Caco-2 (cell line): ENCODE measurements at regions of chr11 and their contacts with region 1.

Region 1: GRCh38 chr11:67265633-67266423 is 445 bp upstream of the GRK2 start:
- DNase-seq: peak; percentile 80 to 96
- H3K4me3 ChIP-seq: peak overlapping the region; percentile 16
- H3K4me3 Mint-ChIP-seq: peak overlapping the region; percentile 100
- H3K27ac Mint-ChIP-seq: peak overlapping the region; percentile 95
- H3K4me1 ChIP-seq: peaks cover 31% of the 10 kb centered on the region
- H3K4me1 Mint-ChIP-seq: peaks cover 28% of the 10 kb centered on the region
- H3K27me3 ChIP-seq: no peaks in the 10 kb centered on the region
- H3K27me3 Mint-ChIP-seq: no peaks in the 10 kb centered on the region
- CTCF ChIP-seq: peak; percentile 78 to 84

Region 2: GRCh38 chr11:67204822-67205221 is 61.0 kb before region 1 on chr11:
- CTCF ChIA-PET with region 1: no interaction called
- POLR2A ChIA-PET with region 1: no interaction called
- intact Hi-C with region 1: no loop called
- DNase-seq: no peak
- H3K4me3 ChIP-seq: no peak overlapping the region
- H3K4me3 Mint-ChIP-seq: no peak overlapping the region
- H3K27ac Mint-ChIP-seq: no peak overlapping the region
- H3K4me1 ChIP-seq: no peaks in the 10 kb centered on the region
- H3K4me1 Mint-ChIP-seq: peaks cover 13% of the 10 kb centered on the region
- H3K27me3 ChIP-seq: no peaks in the 10 kb centered on the region
- H3K27me3 Mint-ChIP-seq: no peaks in the 10 kb centered on the region
- CTCF ChIP-seq: no peak

Region 3: DNA sequence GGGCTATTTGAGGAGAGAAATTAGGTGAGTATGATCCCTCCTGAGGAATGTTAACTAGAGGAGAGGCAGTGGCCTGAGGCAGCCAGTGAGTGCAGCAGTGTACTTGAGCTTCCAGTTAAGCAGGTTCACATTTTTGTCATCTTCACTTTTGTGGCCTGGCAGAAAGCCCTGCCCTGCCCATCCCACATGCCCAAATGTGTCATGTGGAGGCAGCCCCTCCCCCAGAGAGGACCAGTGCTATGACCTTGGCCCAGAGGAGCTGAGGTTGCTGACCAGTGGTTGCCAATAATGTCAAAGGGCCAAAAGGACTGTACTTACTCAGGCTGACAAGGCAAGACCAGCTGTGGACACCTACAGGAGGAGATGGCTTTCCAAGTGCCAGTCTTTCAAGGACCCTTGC is 17.2 kb before region 1 on chr11:
- CTCF ChIA-PET with region 1: interaction called, 6 read pairs
- POLR2A ChIA-PET with region 1: interaction called, 3 read pairs
- intact Hi-C with region 1: loop called (anchors 1 kb)
- DNase-seq: peak; percentile 92 to 95
- H3K4me3 ChIP-seq: no peak overlapping the region
- H3K4me3 Mint-ChIP-seq: peak overlapping the region; percentile 52
- H3K27ac Mint-ChIP-seq: peak overlapping the region; percentile 85
- H3K4me1 ChIP-seq: peaks cover 26% of the 10 kb centered on the region
- H3K4me1 Mint-ChIP-seq: peaks cover 44% of the 10 kb centered on the region
- H3K27me3 ChIP-seq: no peaks in the 10 kb centered on the region
- H3K27me3 Mint-ChIP-seq: no peaks in the 10 kb centered on the region
- CTCF ChIP-seq: no peak

Region 4: GRCh38 chr11:67288452-67289225 is 22.8 kb after region 1 on chr11:
- CTCF ChIA-PET with region 1: interaction called, 15 read pairs
- POLR2A ChIA-PET with region 1: interaction called, 14 read pairs
- intact Hi-C with region 1: loop called (anchors 1 kb)
- DNase-seq: peak; percentile 94 to 95
- H3K4me3 ChIP-seq: peak overlapping the region; percentile 91
- H3K4me3 Mint-ChIP-seq: peak overlapping the region; percentile 99
- H3K27ac Mint-ChIP-seq: peak overlapping the region; percentile 90
- H3K4me1 ChIP-seq: peaks cover 20% of the 10 kb centered on the region
- H3K4me1 Mint-ChIP-seq: peaks cover 29% of the 10 kb centered on the region
- H3K27me3 ChIP-seq: no peaks in the 10 kb centered on the region
- H3K27me3 Mint-ChIP-seq: no peaks in the 10 kb centered on the region
- CTCF ChIP-seq: peak; percentile 51 to 56

Region 5: DNA sequence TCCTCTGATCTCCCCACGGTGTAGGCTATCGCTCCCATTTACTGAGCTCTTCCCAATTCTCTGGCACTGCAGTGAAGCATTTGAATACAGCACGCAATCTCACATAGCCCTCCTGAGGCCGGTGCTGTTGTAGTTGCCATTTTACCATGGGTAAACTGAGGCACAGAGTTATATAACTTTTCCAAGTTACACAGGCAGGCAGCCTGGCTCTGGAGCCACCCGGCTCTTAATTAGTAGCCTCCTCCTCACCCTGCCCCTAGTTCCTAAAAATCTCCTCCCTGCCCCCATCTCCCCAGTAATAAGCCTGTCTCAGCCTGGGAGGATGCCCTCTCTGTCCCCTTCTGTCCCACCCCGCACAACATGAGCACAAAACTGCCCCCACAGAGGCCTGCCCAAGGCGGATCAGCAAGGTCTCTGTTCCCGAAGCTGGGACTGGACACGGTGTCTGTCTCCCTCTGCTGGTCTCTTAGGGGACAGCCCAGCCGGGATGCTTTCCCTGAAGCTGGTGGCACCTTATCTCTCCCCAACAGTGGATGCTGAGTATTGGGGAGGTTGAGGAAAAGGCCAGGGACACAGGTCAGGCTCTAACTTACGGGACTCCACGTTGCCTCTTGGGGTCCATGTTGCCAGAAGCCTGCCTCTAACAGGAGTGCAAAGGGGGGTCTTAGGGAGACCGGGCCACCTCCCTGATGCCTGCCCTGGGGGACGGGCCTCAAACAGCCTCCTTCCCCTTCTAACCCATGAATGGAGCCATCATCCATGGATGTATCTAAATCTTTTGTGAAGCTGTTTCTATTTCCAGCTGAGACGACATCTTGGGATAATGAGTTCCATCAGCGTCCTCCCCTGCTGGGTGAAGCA is 116.7 kb after region 1 on chr11:
- CTCF ChIA-PET with region 1: interaction called, 15 read pairs
- POLR2A ChIA-PET with region 1: interaction called, 3 read pairs
- intact Hi-C with region 1: loop called (anchors 2 kb)
- DNase-seq: peak; percentile 90 to 94
- H3K4me3 ChIP-seq: no peak overlapping the region
- H3K4me3 Mint-ChIP-seq: no peak overlapping the region
- H3K27ac Mint-ChIP-seq: no peak overlapping the region
- H3K4me1 ChIP-seq: peaks cover 14% of the 10 kb centered on the region
- H3K4me1 Mint-ChIP-seq: peaks cover 6% of the 10 kb centered on the region
- H3K27me3 ChIP-seq: 0 out of 2 replicates have a peak, but pooled peaks cover 3% of the 10 kb centered on the region
- H3K27me3 Mint-ChIP-seq: peaks cover 7% of the 10 kb centered on the region
- CTCF ChIP-seq: peak; percentile 99 to 100